Sigmoid colon (tissue), 7 donors: ENCODE measurements at regions of chr5 and their contacts with region 1.

Region 1: DNA sequence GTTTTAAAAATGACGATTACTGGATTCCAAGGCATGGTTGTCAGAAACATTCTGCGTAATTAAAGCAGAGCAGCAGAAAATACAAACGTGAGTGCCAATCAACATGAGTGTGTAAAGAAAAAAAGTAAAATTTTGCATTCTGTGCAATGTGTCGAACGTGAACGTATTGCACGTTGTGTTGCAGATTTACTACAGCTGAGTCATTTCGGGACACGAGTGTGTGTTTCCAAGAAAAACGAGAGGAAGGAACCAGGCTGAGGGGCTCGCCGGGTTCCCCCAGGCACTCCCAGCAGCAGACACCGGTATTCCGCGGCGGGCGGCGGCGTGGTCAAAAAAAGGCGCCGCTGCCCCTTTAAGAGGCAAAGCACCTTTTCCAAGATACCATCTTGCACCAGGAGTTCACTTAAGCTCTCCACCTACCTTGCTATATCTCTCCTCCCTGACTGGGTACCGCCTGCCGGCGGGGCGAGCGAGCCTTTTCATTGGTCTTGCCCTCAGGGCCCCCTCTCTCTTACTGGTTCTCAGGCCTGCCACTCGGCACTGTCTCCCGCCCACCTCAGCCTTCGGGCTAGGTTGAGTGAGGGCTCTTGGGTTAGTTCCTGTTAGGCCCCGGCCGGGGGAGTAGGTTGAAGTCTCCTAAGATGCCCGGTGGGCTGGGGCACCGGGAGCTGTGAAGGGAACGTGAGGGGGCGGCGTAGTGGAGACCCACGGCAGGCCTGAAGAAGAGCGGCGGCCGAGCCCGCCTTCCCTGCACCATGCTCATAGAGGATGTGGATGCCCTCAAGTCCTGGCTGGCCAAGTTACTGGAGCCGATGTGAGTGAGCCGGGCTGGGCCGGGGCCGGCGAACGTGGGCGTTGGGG is at the start of gene RBM27:
- DNase-seq: peak; percentile 99
- H3K4me3 ChIP-seq: peak within 1 kb of the TSS; percentile 68 to 98 (median 88)
- H3K27ac ChIP-seq: peak within 1 kb of the TSS; percentile 83 to 92 (median 86)
- H3K4me1 ChIP-seq: peaks cover 0 to 42% (median 33%) of the 10 kb centered on the region in 4 donors
- H3K27me3 ChIP-seq: no peaks in the 10 kb centered on the region
- CTCF ChIP-seq: no peak
- EP300 ChIP-seq: no peak
- POLR2A ChIP-seq: peak; percentile 54 to 62
- total RNA-seq, gene RBM27: 20.1 to 30.9 (median 25.0) TPM

Region 2: DNA sequence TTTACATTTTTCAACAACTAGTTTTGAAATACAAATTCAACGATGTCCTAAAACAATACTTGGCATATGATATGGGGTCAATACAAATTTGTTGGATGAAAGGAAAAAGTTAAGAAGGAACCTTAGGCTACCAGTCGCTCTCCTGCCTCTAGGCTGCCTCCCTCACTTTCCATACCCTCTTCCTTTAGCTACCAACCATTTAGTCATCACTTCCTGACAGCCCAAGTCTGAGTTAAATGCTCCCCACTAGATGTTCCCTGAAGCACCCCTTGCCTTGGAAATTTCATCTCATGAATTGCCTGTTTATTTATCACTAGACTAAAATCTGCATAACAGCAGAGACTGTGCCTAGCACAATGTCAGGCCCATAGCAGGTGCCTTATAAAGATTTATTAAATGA is 18.1 kb before region 1 on chr5:
- intact Hi-C with region 1: loop called (anchors 1 kb)
- DNase-seq: no peak
- H3K4me3 ChIP-seq: no peak overlapping the region
- H3K27ac ChIP-seq: no peak overlapping the region
- H3K4me1 ChIP-seq: peaks cover 0 to 23% (median 15%) of the 10 kb centered on the region in 4 donors
- H3K27me3 ChIP-seq: no peaks in the 10 kb centered on the region
- CTCF ChIP-seq: no peak
- EP300 ChIP-seq: no peak
- POLR2A ChIP-seq: no peak

Region 3: DNA sequence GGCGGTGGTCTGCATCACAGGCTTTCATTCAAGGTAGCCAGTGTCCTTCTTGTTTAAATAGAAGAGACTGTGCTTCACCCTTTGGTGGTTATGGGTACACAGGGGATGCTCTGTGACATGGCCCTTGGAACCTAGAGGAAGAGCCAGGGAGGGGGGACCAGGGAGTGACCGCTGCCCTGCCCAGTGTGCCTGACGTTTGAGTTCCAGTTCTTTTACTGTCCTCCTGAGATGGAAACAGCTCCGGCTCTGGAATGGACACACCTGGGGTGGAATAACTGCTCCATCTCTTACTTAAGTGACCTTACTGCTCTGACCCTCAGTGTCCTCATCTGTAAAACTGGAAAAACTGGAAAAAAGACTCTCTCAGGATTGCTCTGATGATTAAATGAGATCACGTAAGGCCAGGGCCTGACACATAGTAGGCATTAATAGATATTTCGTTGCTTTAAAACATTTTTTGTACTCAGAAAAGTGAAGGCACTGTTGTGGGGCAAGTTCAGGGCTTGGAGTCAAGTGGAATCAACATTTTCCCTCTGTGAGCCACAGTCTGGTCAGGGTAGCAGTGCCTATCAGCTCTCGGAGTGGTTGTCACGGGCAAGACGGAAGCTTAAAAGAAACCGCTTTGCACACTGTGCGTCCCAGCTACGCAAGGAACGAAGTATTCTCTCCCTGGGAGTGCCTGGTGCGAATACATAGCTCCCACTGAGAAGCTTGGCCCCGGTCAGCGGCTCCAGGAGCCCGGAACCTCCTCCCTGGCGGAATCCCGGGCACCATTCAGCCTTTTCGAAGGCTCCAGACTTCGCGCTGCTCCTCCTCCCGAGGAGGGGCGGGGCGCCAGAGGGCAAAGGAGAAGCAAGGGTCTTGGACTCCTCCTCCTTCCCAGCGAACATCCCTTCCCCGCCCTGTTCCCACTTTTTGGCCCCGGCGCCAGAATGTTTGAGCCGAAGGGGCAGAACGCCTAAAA is 141.2 kb after region 1 on chr5:
- intact Hi-C with region 1: no loop called
- DNase-seq: no peak
- H3K4me3 ChIP-seq: peak overlapping the region in 2 of 4 donors; percentile 2 to 14
- H3K27ac ChIP-seq: no peak overlapping the region
- H3K4me1 ChIP-seq: peaks cover 0 to 29% (median 20%) of the 10 kb centered on the region in 4 donors
- H3K27me3 ChIP-seq: peaks cover 48 to 89% (median 68%) of the 10 kb centered on the region in 3 donors
- CTCF ChIP-seq: no peak
- EP300 ChIP-seq: no peak
- POLR2A ChIP-seq: no peak